ENCODE measurements at regions of chr6 and their contacts with region 1.

Region 1: GRCh38 chr6:2634139-2634964 is 116.4 kb downstream of the MYLK4 start:
- DNase-seq: peak; percentile 90
- ATAC-seq: peak; percentile 91
- H3K4me3 Mint-ChIP-seq: peak overlapping the region; percentile 63
- H3K27ac Mint-ChIP-seq: no peak overlapping the region
- H3K4me1 Mint-ChIP-seq: peaks cover 32% of the 10 kb centered on the region
- H3K27me3 Mint-ChIP-seq: peaks cover 27% of the 10 kb centered on the region
- CTCF ChIP-seq: peak; percentile 96

Region 2: GRCh38 chr6:2596222-2596621 is 38.1 kb before region 1 on chr6:
- CTCF ChIA-PET with region 1: interaction called, 24 read pairs
- POLR2A ChIA-PET with region 1: no interaction called
- DNase-seq: peak; percentile 71
- ATAC-seq: peak; percentile 99
- H3K4me3 Mint-ChIP-seq: no peak overlapping the region
- H3K27ac Mint-ChIP-seq: no peak overlapping the region; the same call in 1 of the 2 replicates
- H3K4me1 Mint-ChIP-seq: no peaks in the 10 kb centered on the region
- H3K27me3 Mint-ChIP-seq: no peaks in the 10 kb centered on the region
- CTCF ChIP-seq: peak; percentile 41; the same call in 1 of the 2 replicates

Region 3: GRCh38 chr6:2622671-2623070 is 11.7 kb before region 1 on chr6:
- CTCF ChIA-PET with region 1: interaction called, 11 read pairs
- POLR2A ChIA-PET with region 1: no interaction called
- DNase-seq: no peak
- ATAC-seq: no peak
- H3K4me3 Mint-ChIP-seq: no peak overlapping the region
- H3K27ac Mint-ChIP-seq: no peak overlapping the region
- H3K4me1 Mint-ChIP-seq: no peaks in the 10 kb centered on the region
- H3K27me3 Mint-ChIP-seq: no peaks in the 10 kb centered on the region
- CTCF ChIP-seq: no peak

Region 4: GRCh38 chr6:2646346-2646745 is 12.0 kb after region 1 on chr6:
- CTCF ChIA-PET with region 1: interaction called, 18 read pairs
- POLR2A ChIA-PET with region 1: no interaction called
- DNase-seq: no peak
- ATAC-seq: no peak
- H3K4me3 Mint-ChIP-seq: no peak overlapping the region
- H3K27ac Mint-ChIP-seq: no peak overlapping the region
- H3K4me1 Mint-ChIP-seq: peaks cover 13% of the 10 kb centered on the region
- H3K27me3 Mint-ChIP-seq: no peaks in the 10 kb centered on the region
- CTCF ChIP-seq: no peak

Region 5: DNA sequence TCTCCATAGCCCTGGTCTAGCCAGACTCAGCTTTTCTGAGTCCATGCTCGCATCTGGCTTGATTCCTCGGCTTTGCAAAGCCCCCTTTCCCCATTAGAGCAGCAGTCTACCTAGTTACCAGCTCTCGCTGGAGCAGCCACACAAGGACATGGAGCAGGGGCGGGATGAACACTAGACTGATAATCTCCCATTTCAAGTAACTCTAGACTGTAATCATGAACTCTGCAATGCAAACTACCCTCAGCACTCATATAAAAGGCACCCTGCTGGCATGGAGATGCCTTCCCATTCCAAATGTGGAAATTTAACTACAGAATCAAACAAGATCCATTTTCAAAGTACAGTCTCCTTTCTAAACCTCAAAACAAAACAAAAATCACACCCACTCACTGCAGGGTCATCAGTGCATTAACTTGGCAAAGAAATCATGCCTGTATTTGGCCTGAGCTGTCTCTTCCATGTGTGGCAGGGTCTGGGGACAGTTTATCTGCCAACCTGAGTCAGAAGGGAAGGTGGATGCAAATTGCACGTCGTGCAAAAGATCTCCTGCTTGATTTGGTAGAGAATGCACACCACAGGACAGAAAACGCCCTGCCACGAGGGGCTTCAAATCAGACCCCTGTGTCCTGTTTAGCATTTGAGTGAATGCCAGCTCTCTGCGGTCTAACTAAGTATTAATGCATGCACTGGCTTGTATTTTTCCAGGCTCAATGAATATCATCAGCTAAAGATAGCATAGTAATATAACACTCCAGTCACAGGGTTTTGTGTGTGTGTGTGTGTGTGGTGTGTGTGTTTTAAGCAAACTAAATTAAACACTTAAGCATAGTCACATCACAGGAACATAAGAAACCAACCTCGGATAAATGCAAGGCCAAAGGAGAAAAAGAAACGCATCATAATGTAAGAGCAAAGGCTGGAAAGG is 31.1 kb after region 1 on chr6:
- CTCF ChIA-PET with region 1: interaction called, 15 read pairs
- POLR2A ChIA-PET with region 1: no interaction called
- DNase-seq: no peak
- ATAC-seq: peak; percentile 75
- H3K4me3 Mint-ChIP-seq: peak overlapping the region; percentile 2
- H3K27ac Mint-ChIP-seq: peak overlapping the region; percentile 27
- H3K4me1 Mint-ChIP-seq: peaks cover 36% of the 10 kb centered on the region
- H3K27me3 Mint-ChIP-seq: no peaks in the 10 kb centered on the region; the same call in 1 of the 2 replicates
- CTCF ChIP-seq: no peak